ENCODE measurements at regions of chr19 and their contacts with region 1.

Region 1: GRCh38 chr19:17334414-17335409 is at the start of gene ANO8:
- DNase-seq: peak; percentile 98
- H3K4me3 ChIP-seq: peak within 1 kb of the TSS; percentile 86
- H3K27ac ChIP-seq: peak within 1 kb of the TSS; percentile 38
- H3K4me1 ChIP-seq: peaks cover 39% of the 10 kb centered on the region
- CTCF ChIP-seq: no peak
- total RNA-seq, gene ANO8: 4.3 and 5.9 TPM in 2 replicates

Region 2: GRCh38 chr19:17292286-17293097 is 42.2 kb before region 1 on chr19:
- CTCF ChIA-PET with region 1: no interaction called
- POLR2A ChIA-PET with region 1: interaction called, 3 read pairs
- intact Hi-C with region 1: loop called (anchors 1 kb)
- DNase-seq: peak; percentile 87
- H3K4me3 ChIP-seq: peak overlapping the region; percentile 77
- H3K27ac ChIP-seq: peak overlapping the region; percentile 63
- H3K4me1 ChIP-seq: peaks cover 27% of the 10 kb centered on the region
- CTCF ChIP-seq: peak; percentile 78